Gastrocnemius medialis (tissue), 4 donors: ENCODE measurements at regions of chr13 and their contacts with region 1.

Region 1: GRCh38 chr13:33542283-33543088 is 256.9 kb upstream of the STARD13 start:
- DNase-seq: peak; percentile 96 to 98
- ATAC-seq: peak; percentile 92 to 95
- H3K4me3 ChIP-seq: peak overlapping the region; percentile 50 to 80 (median 70)
- H3K27ac ChIP-seq: peak overlapping the region; percentile 85 to 99 (median 96)
- H3K4me1 ChIP-seq: peaks cover 27 to 30% of the 10 kb centered on the region in 2 donors
- H3K27me3 ChIP-seq: no peaks in the 10 kb centered on the region
- CTCF ChIP-seq: peak; percentile 87 to 93 (median 92)
- POLR2A ChIP-seq: peak; percentile 42 to 72

Region 2: GRCh38 chr13:32538621-32539246 is 1003.8 kb before region 1 on chr13 and contains the start of gene N4BP2L2:
- in situ Hi-C with region 1: no loop called
- intact Hi-C with region 1: loop called (anchors 2 kb)
- DNase-seq: peak; percentile 95
- ATAC-seq: peak; percentile 96 to 98
- H3K4me3 ChIP-seq: peak within 1 kb of the TSS; percentile 77 to 94 (median 90)
- H3K27ac ChIP-seq: peak within 1 kb of the TSS; percentile 88 to 99 (median 97)
- H3K4me1 ChIP-seq: peaks cover 37 to 40% of the 10 kb centered on the region in 2 donors
- H3K27me3 ChIP-seq: no peaks in the 10 kb centered on the region
- CTCF ChIP-seq: peak in 1 of 5 experiments; percentile 36
- POLR2A ChIP-seq: peak; percentile 65 to 79
- total RNA-seq, gene N4BP2L2: 52.2 to 370 (median 176) TPM

Region 3: DNA sequence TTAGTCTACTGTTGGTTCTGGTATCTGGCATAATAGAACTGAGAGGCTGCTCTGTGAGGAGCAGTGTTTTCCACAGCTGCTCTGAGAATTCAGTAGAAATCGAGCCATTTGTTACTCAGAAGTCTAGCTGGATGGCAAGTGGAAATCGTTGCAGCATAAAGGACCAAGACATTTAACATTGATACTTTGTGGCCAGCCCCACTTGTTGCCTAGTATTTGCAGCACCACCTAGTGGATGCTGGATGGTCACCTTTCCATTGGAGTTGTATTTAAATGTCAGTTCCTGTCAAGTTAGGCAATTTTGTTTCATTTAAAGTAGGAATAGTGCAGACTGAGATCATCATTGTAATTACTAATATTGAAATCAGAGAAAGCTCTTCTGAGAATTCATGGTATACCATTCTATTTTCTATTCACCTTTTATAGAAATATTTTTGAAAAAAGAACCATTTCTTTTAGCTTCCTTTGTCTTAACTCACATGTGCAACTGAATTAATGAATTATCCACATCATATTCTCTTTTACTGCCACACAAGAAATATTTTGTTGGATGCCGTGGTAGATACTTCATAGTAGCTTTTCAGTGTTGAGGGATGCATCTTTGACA is 891.7 kb before region 1 on chr13:
- in situ Hi-C with region 1: no loop called
- intact Hi-C with region 1: loop called (anchors 5 kb)
- DNase-seq: peak in 1 of 2 donors; percentile 42
- ATAC-seq: peak in 1 of 2 donors; percentile 75
- H3K4me3 ChIP-seq: no peak overlapping the region
- H3K27ac ChIP-seq: no peak overlapping the region
- H3K4me1 ChIP-seq: peaks cover 9% of the 10 kb centered on the region in 2 donors
- H3K27me3 ChIP-seq: no peaks in the 10 kb centered on the region
- CTCF ChIP-seq: peak; percentile 32 to 74 (median 43)
- POLR2A ChIP-seq: no peak

Region 4: DNA sequence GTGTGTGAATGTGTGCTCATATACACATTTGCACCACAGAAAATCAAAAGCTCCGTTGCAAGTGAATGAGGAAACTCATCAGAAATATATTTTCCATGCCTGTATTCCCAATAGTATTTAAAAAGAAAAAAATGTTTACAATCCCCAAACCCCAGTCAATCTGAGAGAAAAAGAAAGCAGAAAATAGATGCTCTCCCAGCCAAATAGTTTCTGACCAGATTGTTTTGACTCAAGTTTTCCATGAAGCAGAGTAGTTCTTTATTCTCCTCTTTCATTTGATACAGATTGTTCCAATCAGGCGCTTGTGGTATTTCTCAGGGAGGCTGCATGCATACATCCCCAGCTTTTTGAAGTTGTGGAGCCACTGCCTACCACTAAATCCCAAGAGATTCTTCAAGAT is 367.6 kb before region 1 on chr13:
- in situ Hi-C with region 1: no loop called
- intact Hi-C with region 1: loop called (anchors 5 kb)
- DNase-seq: no peak
- ATAC-seq: no peak
- H3K4me3 ChIP-seq: no peak overlapping the region
- H3K27ac ChIP-seq: peak overlapping the region in 2 of 4 donors; percentile 11 to 12
- H3K4me1 ChIP-seq: peaks cover 23 to 52% of the 10 kb centered on the region in 2 donors
- H3K27me3 ChIP-seq: no peaks in the 10 kb centered on the region
- CTCF ChIP-seq: no peak
- POLR2A ChIP-seq: no peak

Region 5: GRCh38 chr13:33285420-33286124 is 256.9 kb before region 1 on chr13 and contains the start of gene STARD13:
- in situ Hi-C with region 1: no loop called
- intact Hi-C with region 1: loop called (anchors 1 kb)
- DNase-seq: peak; percentile 92 to 93
- ATAC-seq: peak; percentile 92 to 94
- H3K4me3 ChIP-seq: peak within 1 kb of the TSS; percentile 70 to 84 (median 74)
- H3K27ac ChIP-seq: peak within 1 kb of the TSS; percentile 84 to 93 (median 90)
- H3K4me1 ChIP-seq: peaks cover 21 to 33% of the 10 kb centered on the region in 2 donors
- H3K27me3 ChIP-seq: no peaks in the 10 kb centered on the region
- CTCF ChIP-seq: peak; percentile 18 to 45 (median 37)
- POLR2A ChIP-seq: peak; percentile 79 to 91
- total RNA-seq, gene STARD13: 7.7 to 19.3 (median 12.0) TPM

Region 6: DNA sequence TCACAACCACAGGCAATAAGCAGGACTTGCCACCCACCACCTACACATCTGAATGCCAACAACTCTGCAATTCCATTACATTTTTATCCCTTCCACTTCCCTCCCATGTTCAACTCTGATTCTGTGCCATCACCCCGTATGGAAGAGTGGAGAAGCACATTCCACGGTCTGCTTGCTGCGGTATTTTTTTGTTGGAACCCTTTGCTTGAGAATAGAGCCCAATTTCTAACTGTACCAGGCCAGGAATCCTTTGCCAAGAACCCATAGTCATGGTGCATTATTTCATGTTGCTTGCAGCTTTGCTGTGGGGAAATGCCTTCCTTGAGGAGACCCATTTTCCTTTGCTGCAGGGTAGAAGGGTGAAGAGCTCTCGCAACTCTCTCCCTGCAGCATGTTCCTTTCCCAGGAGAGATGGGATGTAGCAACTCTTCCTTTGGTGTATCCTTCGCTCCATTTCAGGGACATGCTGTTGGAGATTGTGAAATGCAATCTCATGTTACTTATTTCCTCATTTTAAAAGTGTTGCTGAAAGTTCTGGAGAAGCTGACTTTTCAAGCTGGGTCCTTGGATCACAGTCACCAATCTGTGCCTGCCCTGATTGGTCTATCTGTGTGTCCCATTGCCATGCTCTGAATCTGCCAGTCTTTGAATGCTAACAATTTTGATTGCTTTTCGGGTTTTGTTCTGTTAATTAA is 187.1 kb before region 1 on chr13:
- in situ Hi-C with region 1: no loop called
- intact Hi-C with region 1: loop called (anchors 2 kb)
- DNase-seq: peak; percentile 41 to 54
- ATAC-seq: peak; percentile 83 to 88
- H3K4me3 ChIP-seq: no peak overlapping the region
- H3K27ac ChIP-seq: peak overlapping the region; percentile 11 to 63 (median 42)
- H3K4me1 ChIP-seq: peaks cover 23 to 42% of the 10 kb centered on the region in 2 donors
- H3K27me3 ChIP-seq: no peaks in the 10 kb centered on the region
- CTCF ChIP-seq: no peak
- POLR2A ChIP-seq: peak in 1 of 2 donors; percentile 9

Region 7: DNA sequence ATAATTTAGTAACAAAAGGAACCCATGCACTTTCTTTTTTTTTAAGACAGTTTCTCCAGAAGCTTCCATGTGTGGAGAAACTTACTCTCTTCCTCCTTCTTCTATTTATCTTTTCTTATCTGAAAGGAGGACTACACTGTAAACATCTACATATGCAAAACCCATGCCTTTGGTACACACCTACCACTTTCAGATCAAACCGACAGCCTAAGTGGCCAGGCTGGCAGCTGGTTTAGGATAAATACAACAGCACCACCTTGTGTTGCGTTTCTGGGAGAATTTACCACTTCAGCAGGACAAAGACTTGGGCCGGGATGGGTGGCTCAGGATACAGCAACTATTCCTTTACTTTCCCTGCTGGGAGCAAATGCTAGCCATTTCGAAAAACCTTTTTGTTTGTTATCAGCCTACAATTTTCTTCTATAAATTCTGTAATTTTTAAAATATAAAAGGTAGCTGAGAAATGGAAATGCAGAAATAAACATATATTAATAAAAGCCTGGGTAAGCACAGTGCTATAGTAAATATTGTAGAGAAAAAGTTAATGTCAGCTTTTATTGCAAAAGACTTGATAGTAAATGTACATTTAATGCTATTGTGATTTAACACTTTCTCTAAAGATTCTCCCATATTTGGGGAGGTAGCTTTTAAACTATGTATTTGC is 181.4 kb after region 1 on chr13:
- in situ Hi-C with region 1: loop called in 3 of 4 experiments (anchors 10 kb)
- intact Hi-C with region 1: loop called (anchors 1 kb)
- DNase-seq: peak; percentile 62
- ATAC-seq: peak; percentile 93 to 94
- H3K4me3 ChIP-seq: no peak overlapping the region
- H3K27ac ChIP-seq: peak overlapping the region in 2 of 4 donors; percentile 22 to 44
- H3K4me1 ChIP-seq: peaks cover 13 to 23% of the 10 kb centered on the region in 2 donors
- H3K27me3 ChIP-seq: no peaks in the 10 kb centered on the region
- CTCF ChIP-seq: peak; percentile 41 to 81 (median 58)
- POLR2A ChIP-seq: no peak